ENCODE measurements at regions of chr1 and their contacts with region 1.

Region 1: GRCh38 chr1:210407207-210407886 is 78.6 kb downstream of the HHAT start:
- DNase-seq: peak; percentile 67 to 69
- H3K4me3 ChIP-seq: no peak overlapping the region
- H3K27ac ChIP-seq: no peak overlapping the region
- H3K4me1 ChIP-seq: no peaks in the 10 kb centered on the region
- H3K27me3 ChIP-seq: no peaks in the 10 kb centered on the region
- CTCF ChIP-seq: peak; percentile 78 to 96 (median 88)
- POLR2A ChIP-seq: no peak

Region 2: DNA sequence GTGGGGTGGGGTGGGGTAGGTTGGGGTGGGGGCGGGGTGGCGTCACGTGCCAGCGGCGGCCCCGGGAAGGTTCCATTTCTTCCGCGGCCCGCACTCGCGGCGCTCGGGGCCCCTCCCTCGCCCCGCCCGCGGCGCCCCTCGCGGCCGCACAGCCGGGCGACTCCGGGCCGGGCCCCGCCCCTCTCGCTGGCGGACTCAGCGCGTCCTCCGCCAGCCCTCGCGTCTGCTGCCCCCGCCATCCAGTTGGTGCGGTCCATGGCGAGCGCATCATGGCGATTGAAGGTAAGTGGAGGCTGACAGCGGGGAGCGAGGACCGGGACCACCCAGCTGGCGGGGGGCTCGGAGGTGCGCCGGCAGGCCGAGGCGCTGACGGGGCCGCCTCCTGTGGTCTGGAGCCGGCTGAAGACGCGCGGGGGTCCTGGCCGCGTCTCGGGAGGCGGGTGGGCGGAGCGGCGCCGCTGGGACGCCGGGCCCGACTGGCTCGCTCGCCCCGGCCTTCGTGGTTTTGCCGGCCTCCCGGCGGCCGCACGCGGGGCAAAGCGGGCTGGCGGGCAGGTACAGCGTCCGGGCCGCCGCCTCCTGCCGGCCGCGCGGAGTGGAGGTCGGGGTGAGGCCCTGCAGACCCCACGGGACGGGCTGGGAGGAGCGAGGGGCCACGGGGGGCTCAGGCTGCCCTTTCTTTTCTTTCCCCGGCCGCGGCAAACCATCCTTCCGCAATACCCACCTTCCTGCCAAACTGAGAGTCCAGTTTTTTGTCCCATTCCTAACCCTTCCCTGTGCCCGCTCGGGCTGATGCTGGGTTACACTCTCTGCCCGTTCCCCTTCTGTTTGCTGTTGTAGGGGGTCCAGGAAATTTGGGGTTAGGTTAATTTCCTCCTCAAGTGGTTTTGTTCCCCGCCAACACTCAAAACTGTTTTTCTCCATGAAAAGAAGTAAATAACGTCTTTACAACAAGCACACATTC is 469.1 kb before region 1 on chr1 and contains the start of gene SYT14:
- intact Hi-C with region 1: no loop called
- DNase-seq: peak; percentile 75 to 77
- H3K4me3 ChIP-seq: peak within 1 kb of the TSS; percentile 52 to 62 (median 61)
- H3K27ac ChIP-seq: peak within 1 kb of the TSS; percentile 61 to 84 (median 75)
- H3K4me1 ChIP-seq: peaks cover 0 to 4% of the 10 kb centered on the region in 2 donors
- H3K27me3 ChIP-seq: no peaks in the 10 kb centered on the region
- CTCF ChIP-seq: peak in 1 of 6 experiments; percentile 27
- POLR2A ChIP-seq: peak in 1 of 2 donors; percentile 64
- total RNA-seq, gene SYT14: 7.6 to 20.0 (median 15.1) TPM

Region 3: DNA sequence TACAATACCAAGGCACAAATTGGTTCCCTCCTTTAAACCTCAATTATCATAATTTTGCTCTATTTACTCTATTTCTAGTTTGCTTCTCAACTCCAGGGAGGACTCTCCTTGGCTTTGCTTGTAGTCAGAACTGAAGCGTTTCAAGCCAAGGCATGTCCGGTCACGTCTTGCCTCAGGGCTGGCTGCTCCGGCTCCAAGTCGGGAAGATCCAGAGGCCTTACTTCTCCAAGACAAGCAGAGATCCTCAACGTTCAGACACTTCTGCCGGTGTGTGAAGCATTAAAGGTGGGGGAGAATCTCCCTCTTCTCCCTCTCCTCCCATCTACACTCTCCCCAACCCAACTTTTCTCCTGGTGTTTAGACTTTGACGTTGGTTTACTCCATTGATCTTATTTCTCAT is 85.8 kb before region 1 on chr1:
- intact Hi-C with region 1: no loop called
- DNase-seq: no peak
- H3K4me3 ChIP-seq: no peak overlapping the region
- H3K27ac ChIP-seq: no peak overlapping the region
- H3K4me1 ChIP-seq: no peaks in the 10 kb centered on the region
- H3K27me3 ChIP-seq: no peaks in the 10 kb centered on the region
- CTCF ChIP-seq: no peak
- POLR2A ChIP-seq: no peak

Region 4: GRCh38 chr1:210684466-210685294 is 277.3 kb after region 1 on chr1:
- intact Hi-C with region 1: no loop called
- DNase-seq: no peak
- H3K4me3 ChIP-seq: no peak overlapping the region
- H3K27ac ChIP-seq: no peak overlapping the region
- H3K4me1 ChIP-seq: peaks cover 0 to 3% of the 10 kb centered on the region in 2 donors
- H3K27me3 ChIP-seq: no peaks in the 10 kb centered on the region
- CTCF ChIP-seq: no peak
- POLR2A ChIP-seq: no peak

Region 5: DNA sequence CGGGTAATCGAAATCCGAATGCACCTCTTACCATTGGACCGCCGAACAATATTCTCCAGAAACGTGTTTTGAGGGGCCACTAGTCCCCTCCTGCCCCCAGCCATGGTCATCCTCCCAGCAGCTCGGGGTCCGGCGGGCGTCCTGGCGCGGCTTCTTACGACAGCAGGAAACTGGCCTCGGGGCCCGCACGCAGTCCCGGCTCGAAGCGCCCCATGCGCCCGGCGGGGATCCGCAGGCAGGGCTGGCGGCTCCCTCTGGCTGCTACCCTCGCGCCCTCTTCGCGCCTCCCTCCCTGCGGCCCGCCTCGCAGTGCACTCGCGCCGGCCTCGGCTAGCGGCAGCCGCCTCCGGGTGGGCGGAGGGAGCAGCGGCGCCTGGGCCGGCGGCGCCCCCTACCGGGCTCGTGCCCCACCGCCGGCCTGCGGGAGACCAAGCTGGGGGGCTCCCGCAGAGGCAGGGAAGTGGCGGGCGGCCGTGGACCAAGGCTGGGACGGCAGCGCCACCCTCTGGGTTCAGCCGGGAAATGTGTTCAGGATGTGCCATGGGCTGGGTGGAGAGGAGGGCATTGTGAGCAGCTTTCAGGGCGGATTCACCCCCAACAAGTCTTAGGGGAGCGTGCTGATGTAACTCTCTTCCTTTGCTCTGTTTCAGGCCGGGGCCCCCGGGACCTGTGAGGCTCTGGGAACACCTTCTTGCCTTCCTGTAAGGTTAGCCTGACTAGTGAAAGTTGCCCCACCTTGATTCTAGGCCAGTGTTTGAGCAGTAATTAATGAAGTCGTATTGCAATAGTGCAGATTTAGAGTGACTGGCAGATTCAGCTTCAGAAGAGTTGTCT is 726.7 kb after region 1 on chr1 and contains the start of gene KCNH1:
- intact Hi-C with region 1: loop called (anchors 5 kb)
- DNase-seq: peak; percentile 80
- H3K4me3 ChIP-seq: peak within 1 kb of the TSS in 2 of 3 donors; percentile 5 to 16
- H3K27ac ChIP-seq: no peak within 1 kb of the TSS
- H3K4me1 ChIP-seq: peaks cover 6 to 10% of the 10 kb centered on the region in 2 donors
- H3K27me3 ChIP-seq: no peaks in the 10 kb centered on the region
- CTCF ChIP-seq: peak; percentile 33 to 98 (median 90)
- POLR2A ChIP-seq: no peak
- total RNA-seq, gene KCNH1: 1.3 TPM in 2 of 4 donors, not detected in the others